ENCODE measurements at regions of chr9 and their contacts with region 1.

Region 1: GRCh38 chr9:120936011-120936763 is 9.6 kb upstream of the TRAF1 start:
- DNase-seq: peak; percentile 93
- ATAC-seq: peak; percentile 66
- H3K4me3 ChIP-seq: peak overlapping the region; percentile 38; the same call in 1 of the 2 replicates
- H3K27ac ChIP-seq: peak overlapping the region; percentile 74
- H3K4me1 ChIP-seq: peaks cover 48% of the 10 kb centered on the region
- H3K27me3 ChIP-seq: no peaks in the 10 kb centered on the region
- CTCF ChIP-seq: peak; percentile 91

Region 2: GRCh38 chr9:120755827-120756434 is 180.3 kb before region 1 on chr9:
- CTCF ChIA-PET with region 1: no interaction called
- POLR2A ChIA-PET with region 1: no interaction called
- intact Hi-C with region 1: loop called (anchors 2 kb)
- DNase-seq: peak; percentile 73
- ATAC-seq: peak; percentile 50; the same call in 1 of the 2 replicates
- H3K4me3 ChIP-seq: no peak overlapping the region
- H3K27ac ChIP-seq: no peak overlapping the region
- H3K4me1 ChIP-seq: no peaks in the 10 kb centered on the region
- H3K27me3 ChIP-seq: no peaks in the 10 kb centered on the region
- CTCF ChIP-seq: peak; percentile 84

Region 3: DNA sequence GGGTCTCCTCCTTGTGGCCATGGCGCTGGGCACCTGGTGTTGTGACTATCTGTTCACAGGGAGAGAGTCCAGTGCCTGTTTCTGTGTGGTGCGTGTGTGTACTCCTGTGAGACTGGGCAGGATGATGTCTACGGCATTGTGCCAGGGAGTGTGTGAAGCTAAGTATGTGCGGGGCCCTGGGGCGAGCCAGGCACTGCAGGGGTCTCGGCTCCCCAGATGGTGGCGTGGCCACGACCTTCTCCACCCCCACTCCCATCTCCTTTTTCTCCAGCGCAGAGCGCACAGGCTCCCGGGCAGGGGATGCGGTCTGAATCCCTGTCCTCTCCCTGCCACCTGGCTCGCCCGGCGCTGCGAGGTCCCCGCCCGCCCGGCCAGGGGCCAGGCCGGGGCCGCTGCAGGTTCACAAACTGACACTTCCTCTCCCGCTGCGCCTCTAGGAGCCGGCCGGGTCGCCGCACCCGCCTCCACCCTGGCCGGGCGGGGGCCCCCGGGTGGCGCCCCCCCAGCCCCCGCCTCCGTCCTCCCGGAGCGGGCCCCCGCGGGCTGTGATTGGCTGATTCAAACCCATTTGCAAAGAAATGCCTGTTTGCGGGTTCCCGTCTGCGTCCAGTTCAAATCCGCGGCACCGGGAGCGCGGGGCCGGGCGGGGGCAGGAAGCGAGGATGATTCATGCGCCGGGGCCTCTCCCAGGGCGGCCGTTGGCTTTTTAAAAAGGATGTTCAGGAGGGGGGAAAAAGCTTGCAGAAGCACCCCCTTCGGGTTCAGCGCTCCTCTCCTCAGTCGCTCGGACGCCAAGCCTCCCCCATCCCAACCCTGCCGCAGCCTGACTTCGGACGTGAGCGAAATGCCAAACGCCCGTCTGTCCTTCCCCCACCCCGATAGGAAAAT is 60.0 kb before region 1 on chr9:
- CTCF ChIA-PET with region 1: no interaction called
- POLR2A ChIA-PET with region 1: no interaction called
- intact Hi-C with region 1: loop called (anchors 2 kb)
- DNase-seq: peak; percentile 89
- ATAC-seq: peak; percentile 56
- H3K4me3 ChIP-seq: peak overlapping the region; percentile 81
- H3K27ac ChIP-seq: peak overlapping the region; percentile 99
- H3K4me1 ChIP-seq: peaks cover 47% of the 10 kb centered on the region
- H3K27me3 ChIP-seq: no peaks in the 10 kb centered on the region
- CTCF ChIP-seq: no peak; the same call in 1 of the 2 replicates